T-cell (primary cell): ENCODE measurements at regions of chr17 and their contacts with region 1.

Region 1: GRCh38 chr17:27601069-27601975 is 29.7 kb upstream of the LGALS9 start:
- DNase-seq: peak; percentile 37 to 88 (median 74)
- ATAC-seq: peak; percentile 36 to 46 (median 42)
- H3K4me3 ChIP-seq: no peak overlapping the region
- H3K4me3 Mint-ChIP-seq: no peak overlapping the region
- H3K27ac ChIP-seq: no peak overlapping the region
- H3K27ac Mint-ChIP-seq: no peak overlapping the region
- H3K4me1 ChIP-seq: peaks cover 0 to 9% of the 10 kb centered on the region in 2 experiments
- H3K4me1 Mint-ChIP-seq: peaks cover 0 to 5% (median 4%) of the 10 kb centered on the region in 3 donors
- H3K27me3 ChIP-seq: no peaks in the 10 kb centered on the region
- H3K27me3 Mint-ChIP-seq: no peaks in the 10 kb centered on the region

Region 2: GRCh38 chr17:27236717-27237315 is 364.5 kb before region 1 on chr17:
- CTCF ChIA-PET with region 1: interaction called, 49 to 162 read pairs
- POLR2A ChIA-PET with region 1: no interaction called
- DNase-seq: peak in 34 of 35 experiments; percentile 23 to 84 (median 64)
- ATAC-seq: peak; percentile 64 to 79 (median 74)
- H3K4me3 ChIP-seq: no peak overlapping the region
- H3K4me3 Mint-ChIP-seq: no peak overlapping the region
- H3K27ac ChIP-seq: no peak overlapping the region
- H3K27ac Mint-ChIP-seq: no peak overlapping the region
- H3K4me1 ChIP-seq: no peaks in the 10 kb centered on the region
- H3K4me1 Mint-ChIP-seq: no peaks in the 10 kb centered on the region
- H3K27me3 ChIP-seq: no peaks in the 10 kb centered on the region
- H3K27me3 Mint-ChIP-seq: no peaks in the 10 kb centered on the region

Region 3: DNA sequence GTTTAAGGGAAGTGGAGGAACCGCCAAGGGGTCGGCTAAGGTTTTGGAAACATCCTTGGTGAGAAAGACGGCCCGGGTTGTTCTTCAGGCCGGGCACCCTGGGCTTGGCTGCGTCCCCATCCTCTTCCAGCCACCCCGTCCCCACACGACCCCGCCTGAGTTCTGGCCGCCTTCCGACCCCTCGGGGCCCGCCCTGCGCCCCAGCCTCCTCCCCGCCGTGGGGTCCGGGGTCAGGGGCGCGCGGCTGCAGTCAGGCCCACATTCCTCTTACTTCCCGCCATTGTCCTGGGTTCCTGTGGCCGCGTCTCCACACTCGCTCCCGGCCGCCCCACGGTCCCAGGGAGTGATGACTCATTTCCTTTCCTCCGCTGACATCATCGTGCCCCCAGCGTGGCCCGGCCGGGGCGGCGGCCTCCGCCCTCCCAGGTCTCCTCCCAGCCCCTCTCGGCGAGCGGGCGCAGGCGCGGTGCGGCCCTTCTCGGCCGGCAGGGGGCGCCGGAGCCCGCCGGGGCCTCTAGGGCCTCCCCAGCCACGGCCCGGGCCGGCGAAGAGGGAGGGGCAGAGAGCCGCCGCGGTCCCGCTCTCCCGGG is 247.8 kb before region 1 on chr17:
- CTCF ChIA-PET with region 1: interaction called, 10 to 11 read pairs
- POLR2A ChIA-PET with region 1: no interaction called
- DNase-seq: peak; percentile 64 to 92 (median 77)
- ATAC-seq: peak; percentile 88 to 94 (median 92)
- H3K4me3 ChIP-seq: peak overlapping the region; percentile 57 to 79
- H3K4me3 Mint-ChIP-seq: peak overlapping the region; percentile 57 to 82 (median 77)
- H3K27ac ChIP-seq: peak overlapping the region; percentile 77
- H3K27ac Mint-ChIP-seq: peak overlapping the region; percentile 81 to 87
- H3K4me1 ChIP-seq: peaks cover 0 to 25% of the 10 kb centered on the region in 2 experiments
- H3K4me1 Mint-ChIP-seq: peaks cover 14 to 35% (median 29%) of the 10 kb centered on the region in 3 donors
- H3K27me3 ChIP-seq: peaks cover 0 to 3% of the 10 kb centered on the region in 2 experiments
- H3K27me3 Mint-ChIP-seq: no peaks in the 10 kb centered on the region

Region 4: GRCh38 chr17:27559506-27560481 is 41.5 kb before region 1 on chr17:
- CTCF ChIA-PET with region 1: interaction called, 11 read pairs
- POLR2A ChIA-PET with region 1: no interaction called
- DNase-seq: no peak
- ATAC-seq: no peak
- H3K4me3 ChIP-seq: no peak overlapping the region
- H3K4me3 Mint-ChIP-seq: no peak overlapping the region
- H3K27ac ChIP-seq: no peak overlapping the region
- H3K27ac Mint-ChIP-seq: no peak overlapping the region
- H3K4me1 ChIP-seq: peaks cover 0 to 7% of the 10 kb centered on the region in 2 experiments
- H3K4me1 Mint-ChIP-seq: peaks cover 17 to 19% (median 18%) of the 10 kb centered on the region in 3 donors
- H3K27me3 ChIP-seq: no peaks in the 10 kb centered on the region
- H3K27me3 Mint-ChIP-seq: no peaks in the 10 kb centered on the region

Region 5: GRCh38 chr17:27651411-27652345 is 50.4 kb after region 1 on chr17:
- CTCF ChIA-PET with region 1: interaction called, 9 to 30 read pairs
- POLR2A ChIA-PET with region 1: no interaction called
- DNase-seq: peak in 33 of 35 experiments; percentile 16 to 75 (median 57)
- ATAC-seq: peak; percentile 49 to 66 (median 59)
- H3K4me3 ChIP-seq: no peak overlapping the region
- H3K4me3 Mint-ChIP-seq: no peak overlapping the region
- H3K27ac ChIP-seq: no peak overlapping the region
- H3K27ac Mint-ChIP-seq: peak overlapping the region in 1 of 2 donors; percentile 44
- H3K4me1 ChIP-seq: peaks cover 0 to 10% of the 10 kb centered on the region in 2 experiments
- H3K4me1 Mint-ChIP-seq: peaks cover 6 to 11% (median 10%) of the 10 kb centered on the region in 3 donors
- H3K27me3 ChIP-seq: peaks cover 0 to 9% of the 10 kb centered on the region in 2 experiments
- H3K27me3 Mint-ChIP-seq: peaks cover 0 to 2% of the 10 kb centered on the region in 2 donors

Region 6: GRCh38 chr17:27666831-27667560 is 65.7 kb after region 1 on chr17:
- CTCF ChIA-PET with region 1: no interaction called
- POLR2A ChIA-PET with region 1: no interaction called
- DNase-seq: peak in 1 of 35 experiments; percentile 13
- ATAC-seq: no peak
- H3K4me3 ChIP-seq: no peak overlapping the region
- H3K4me3 Mint-ChIP-seq: no peak overlapping the region
- H3K27ac ChIP-seq: no peak overlapping the region
- H3K27ac Mint-ChIP-seq: no peak overlapping the region
- H3K4me1 ChIP-seq: no peaks in the 10 kb centered on the region
- H3K4me1 Mint-ChIP-seq: no peaks in the 10 kb centered on the region
- H3K27me3 ChIP-seq: peaks cover 0 to 2% of the 10 kb centered on the region in 2 experiments
- H3K27me3 Mint-ChIP-seq: peaks cover 0 to 4% of the 10 kb centered on the region in 2 donors